ENCODE measurements at regions of chr1 and their contacts with region 1.

Region 1: DNA sequence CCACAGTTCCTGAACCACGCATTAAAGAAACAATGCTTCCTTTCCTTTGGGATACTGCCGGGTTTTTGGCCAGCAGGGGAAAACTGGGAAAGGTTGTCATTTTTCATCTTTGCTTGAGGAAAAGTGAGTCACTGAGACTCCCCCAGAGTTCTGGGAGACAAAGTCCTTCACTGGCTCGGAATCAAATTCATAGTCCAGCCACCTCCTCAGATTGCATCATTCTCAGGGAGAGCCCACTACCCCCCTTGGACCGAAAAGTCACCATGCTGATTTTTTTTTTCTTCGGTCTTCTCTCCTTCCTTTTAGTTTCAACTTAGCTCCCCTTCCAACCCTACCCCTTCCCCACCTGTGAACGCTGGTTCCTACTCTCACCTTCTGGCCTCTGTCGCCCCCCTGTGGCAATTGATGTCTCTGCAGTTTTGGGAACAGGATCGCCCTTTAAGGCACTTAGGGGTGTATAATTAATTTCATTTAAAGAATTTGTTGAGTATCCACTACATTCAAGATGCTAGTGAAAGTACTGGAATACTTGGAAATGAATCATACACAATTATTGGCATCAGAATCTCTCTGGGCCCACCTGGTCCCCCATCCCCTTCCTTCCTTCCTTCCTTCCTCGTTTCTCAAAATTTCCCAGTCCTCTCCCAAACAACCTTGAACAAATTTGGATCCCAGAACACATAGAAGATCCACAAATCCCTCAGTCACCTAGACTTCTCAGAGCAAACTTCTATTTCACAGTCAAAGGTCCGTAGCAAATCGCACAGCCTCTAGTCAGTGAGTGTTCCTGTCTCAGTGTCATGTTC is 6.9 kb downstream of the ACKR1 start:
- DNase-seq: no peak
- H3K4me3 ChIP-seq: no peak overlapping the region
- H3K27ac ChIP-seq: no peak overlapping the region
- H3K4me1 ChIP-seq: peaks cover 8% of the 10 kb centered on the region
- H3K27me3 ChIP-seq: peaks cover 86% of the 10 kb centered on the region
- CTCF ChIP-seq: peak; percentile 82

Region 2: DNA sequence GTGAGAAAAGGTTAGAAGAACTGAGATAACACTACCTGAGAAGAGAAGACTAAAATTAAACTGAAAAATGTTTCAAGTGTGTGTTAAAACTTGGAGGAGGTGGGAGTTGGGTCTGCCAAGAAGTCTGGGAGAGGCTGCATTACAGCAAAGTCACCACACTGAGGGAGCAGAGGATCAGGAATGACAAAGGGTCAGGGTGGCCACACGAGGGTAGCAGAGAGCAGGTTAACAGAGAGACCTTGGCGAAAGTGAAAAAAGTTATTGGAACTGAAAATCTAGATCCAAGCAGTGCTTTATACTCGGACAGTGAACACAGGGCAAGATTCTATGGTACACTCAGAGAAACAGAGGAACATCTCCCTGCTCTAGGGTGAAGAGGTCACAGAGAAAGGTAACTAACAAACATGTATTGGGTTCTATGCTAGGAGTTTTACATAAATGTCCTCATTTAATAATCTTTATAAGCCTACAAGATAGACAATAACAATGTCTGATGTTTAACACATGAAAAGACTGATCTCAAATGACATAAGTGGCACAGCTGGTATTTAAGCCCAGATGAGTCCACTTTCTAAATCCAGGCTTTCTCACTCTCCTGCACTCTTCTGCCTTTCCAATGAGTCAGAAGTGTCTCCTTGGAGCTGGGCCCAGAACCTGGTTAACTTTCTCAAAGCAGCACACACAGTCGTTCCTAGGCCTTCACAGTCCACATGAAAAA is 50.4 kb before region 1 on chr1:
- intact Hi-C with region 1: loop called (anchors 2 kb)
- DNase-seq: peak; percentile 47
- H3K4me3 ChIP-seq: no peak overlapping the region
- H3K27ac ChIP-seq: no peak overlapping the region
- H3K4me1 ChIP-seq: peaks cover 6% of the 10 kb centered on the region
- H3K27me3 ChIP-seq: peaks cover 47% of the 10 kb centered on the region
- CTCF ChIP-seq: peak; percentile 94

Measured in left ventricle myocardium inferior (tissue), 1 donor.